ENCODE measurements at regions of chr6 and their contacts with region 1.

Region 1: DNA sequence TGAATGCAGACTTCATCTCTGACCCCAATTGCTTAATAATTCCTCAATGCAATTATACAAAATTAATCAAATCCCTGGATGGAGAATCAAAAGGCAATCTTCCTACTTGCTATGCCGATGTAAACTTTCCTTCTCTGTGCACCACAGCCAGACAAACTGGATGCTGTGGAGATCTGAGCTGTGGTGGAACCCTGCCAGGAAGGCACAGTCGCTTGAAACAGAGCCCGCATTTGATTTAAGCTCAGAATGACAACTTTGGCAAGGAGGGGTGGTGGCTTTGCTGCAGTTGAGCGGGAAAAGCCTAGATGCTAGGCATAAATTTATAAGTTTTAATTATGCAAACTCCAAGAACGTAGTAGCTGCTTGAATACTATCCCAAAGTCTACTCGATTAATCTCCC is 190.8 kb downstream of the MTFR2 start:
- DNase-seq: no peak
- ATAC-seq: no peak
- H3K4me3 ChIP-seq: no peak overlapping the region
- H3K27ac ChIP-seq: peak overlapping the region in 3 of 4 donors; percentile 6 to 42 (median 22)
- H3K4me1 ChIP-seq: peaks cover 5 to 31% of the 10 kb centered on the region in 2 donors
- H3K27me3 ChIP-seq: no peaks in the 10 kb centered on the region
- CTCF ChIP-seq: no peak
- POLR2A ChIP-seq: no peak

Region 2: DNA sequence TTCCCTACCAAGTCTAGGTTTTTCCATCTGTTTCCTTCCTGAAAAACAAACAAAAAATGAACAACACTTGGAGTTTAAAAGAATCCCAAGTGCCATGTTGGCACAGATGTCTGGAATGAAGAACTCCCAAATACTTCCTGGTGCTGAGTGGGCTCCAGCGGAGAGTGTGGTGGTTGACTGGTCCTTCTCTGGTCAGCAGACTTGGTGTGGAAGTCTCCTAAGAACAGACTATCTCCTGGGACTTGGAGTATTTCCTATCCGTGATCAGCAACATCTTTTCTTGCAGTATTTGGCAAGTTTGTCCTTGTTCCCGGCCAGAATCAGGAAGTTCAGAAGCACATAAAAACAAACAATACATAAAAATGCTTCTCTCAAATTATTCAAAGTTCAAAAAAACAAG is 36.7 kb after region 1 on chr6:
- in situ Hi-C with region 1: no loop called
- intact Hi-C with region 1: loop called (anchors 5 kb)
- DNase-seq: peak; percentile 31 to 51
- ATAC-seq: peak; percentile 86 to 95
- H3K4me3 ChIP-seq: peak overlapping the region in 1 of 4 donors; percentile 15
- H3K27ac ChIP-seq: peak overlapping the region; percentile 39 to 78 (median 70)
- H3K4me1 ChIP-seq: peaks cover 0 to 8% of the 10 kb centered on the region in 2 donors
- H3K27me3 ChIP-seq: no peaks in the 10 kb centered on the region
- CTCF ChIP-seq: no peak
- POLR2A ChIP-seq: no peak

Measured in gastrocnemius medialis (tissue), 4 donors.